ENCODE measurements at regions of chr2 and their contacts with region 1.

Region 1: DNA sequence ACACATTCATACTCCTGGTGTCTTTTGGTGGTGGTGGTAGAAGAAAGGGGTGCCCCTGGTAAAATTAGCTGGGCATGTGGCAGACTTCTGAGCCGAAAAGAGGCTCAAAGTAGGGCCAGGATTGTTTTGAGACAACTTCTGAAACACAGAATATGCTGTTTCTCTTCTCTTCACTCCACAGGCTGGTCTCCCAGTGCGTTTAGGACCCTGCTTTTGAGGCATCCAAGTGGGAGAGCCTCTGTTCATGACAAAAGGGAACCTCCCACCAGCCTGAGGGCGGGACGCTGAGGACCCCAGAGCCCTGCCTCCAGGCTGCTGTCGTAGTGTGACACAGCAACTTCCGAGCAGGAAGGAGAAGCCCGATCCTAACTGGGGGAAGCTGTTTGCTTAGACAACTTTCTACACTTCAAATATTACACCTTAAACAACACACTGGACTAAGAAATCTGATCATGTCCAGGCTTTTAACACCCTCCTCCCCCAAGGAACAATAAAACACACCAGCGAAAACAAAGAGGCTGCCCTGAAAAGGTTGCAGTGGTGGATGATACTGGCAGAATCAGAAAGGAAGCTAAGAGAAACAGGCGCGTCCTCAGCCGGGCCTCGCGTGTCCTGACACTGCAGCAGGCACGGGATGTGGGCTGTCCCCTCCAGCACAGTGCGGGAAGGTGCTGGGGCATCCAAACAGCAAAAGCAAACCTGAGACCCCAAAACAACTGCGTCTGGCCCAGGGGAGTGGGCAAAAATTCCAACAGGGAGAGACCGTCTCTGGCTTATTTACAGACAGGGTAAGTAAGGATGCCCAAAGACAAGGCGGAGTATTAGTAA is 9.3 kb downstream of the SERTAD2 start:
- DNase-seq: peak; percentile 82
- ATAC-seq: peak; percentile 75
- H3K4me3 Mint-ChIP-seq: peak overlapping the region; percentile 82
- H3K27ac Mint-ChIP-seq: peak overlapping the region; percentile 90
- H3K4me1 Mint-ChIP-seq: peaks cover 89% of the 10 kb centered on the region
- H3K27me3 Mint-ChIP-seq: no peaks in the 10 kb centered on the region
- CTCF ChIP-seq: no peak

Region 2: GRCh38 chr2:64426183-64426952 is 218.0 kb before region 1 on chr2:
- CTCF ChIA-PET with region 1: no interaction called
- POLR2A ChIA-PET with region 1: no interaction called
- intact Hi-C with region 1: no loop called
- DNase-seq: no peak
- ATAC-seq: no peak
- H3K4me3 Mint-ChIP-seq: no peak overlapping the region
- H3K27ac Mint-ChIP-seq: no peak overlapping the region
- H3K4me1 Mint-ChIP-seq: no peaks in the 10 kb centered on the region
- H3K27me3 Mint-ChIP-seq: peaks cover 2% of the 10 kb centered on the region
- CTCF ChIP-seq: no peak

Region 3: DNA sequence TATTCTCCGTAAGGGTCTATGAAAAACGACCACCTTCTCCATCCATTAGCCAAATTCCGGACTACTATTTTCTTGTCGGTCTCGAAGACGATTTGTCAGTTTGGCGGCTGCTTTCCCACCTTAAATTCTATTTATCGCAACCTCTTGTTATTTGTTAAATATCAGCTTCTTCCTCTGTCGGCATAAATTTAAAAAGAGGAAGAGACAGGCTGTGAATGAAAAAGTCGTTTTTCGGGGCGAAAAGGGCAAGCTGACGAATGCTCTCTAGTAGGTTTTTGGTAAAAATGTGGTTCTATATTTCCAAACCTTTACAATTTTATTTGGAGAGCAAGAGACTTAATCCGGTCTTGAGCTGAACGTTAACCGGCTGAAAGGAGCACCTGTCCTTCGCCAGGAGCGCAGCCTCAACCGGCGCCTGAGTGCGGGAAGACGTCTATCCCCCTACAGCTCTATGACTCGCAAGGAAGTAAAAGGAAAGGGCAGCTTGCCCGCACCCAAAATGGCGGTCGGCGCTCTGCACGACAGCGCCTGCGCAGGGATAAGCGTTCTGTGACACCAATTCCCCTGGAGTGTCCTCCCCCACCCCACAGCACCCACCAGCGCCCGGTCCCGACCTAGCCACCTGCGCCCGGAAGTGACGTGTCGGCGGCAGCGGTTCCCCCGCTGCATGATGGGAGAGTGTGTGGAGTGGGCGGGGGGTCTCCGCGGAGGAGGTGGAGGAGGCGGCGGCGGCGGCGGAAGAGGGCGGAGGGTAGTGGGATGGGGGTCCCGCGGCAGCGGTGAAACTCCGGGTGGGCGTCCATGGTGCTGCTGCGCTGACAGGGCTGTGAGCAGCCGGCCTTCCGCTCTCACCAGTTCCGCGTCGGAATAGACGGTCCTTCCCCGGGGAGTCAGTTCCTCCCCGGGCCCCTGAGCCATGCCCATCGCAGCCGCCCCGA is 120.5 kb before region 1 on chr2 and contains the start of gene AFTPH:
- CTCF ChIA-PET with region 1: interaction called, 7 read pairs
- POLR2A ChIA-PET with region 1: interaction called, 4 read pairs
- intact Hi-C with region 1: loop called (anchors 10 kb)
- DNase-seq: peak; percentile 99
- ATAC-seq: peak; percentile 93
- H3K4me3 Mint-ChIP-seq: peak within 1 kb of the TSS; percentile 99
- H3K27ac Mint-ChIP-seq: peak within 1 kb of the TSS; percentile 100
- H3K4me1 Mint-ChIP-seq: peaks cover 33% of the 10 kb centered on the region
- H3K27me3 Mint-ChIP-seq: no peaks in the 10 kb centered on the region
- CTCF ChIP-seq: no peak
- total RNA-seq, gene AFTPH: 30.6 to 31.1 TPM

Region 4: DNA sequence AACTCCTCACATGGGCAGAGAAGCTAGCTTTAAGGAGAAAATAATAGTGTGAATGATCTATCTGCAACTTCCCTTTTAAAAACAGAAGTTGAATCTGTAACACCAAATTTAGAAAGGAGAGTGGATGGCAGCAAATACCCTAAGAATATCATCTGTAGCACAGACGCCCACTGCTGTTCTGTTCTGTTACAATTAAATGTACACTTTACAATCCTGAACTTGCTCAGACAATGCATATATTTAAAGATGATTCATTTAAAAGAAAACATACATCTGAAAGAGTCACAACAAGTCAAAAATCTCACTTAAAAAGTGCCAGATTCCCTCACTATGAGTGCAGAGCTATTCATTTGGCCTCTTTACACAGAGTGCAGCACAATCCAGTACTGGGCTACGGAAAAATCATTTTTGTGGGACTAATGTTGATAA is 17.4 kb after region 1 on chr2:
- CTCF ChIA-PET with region 1: interaction called, 83 read pairs
- POLR2A ChIA-PET with region 1: interaction called, 48 read pairs
- intact Hi-C with region 1: no loop called
- DNase-seq: no peak
- ATAC-seq: peak; percentile 45
- H3K4me3 Mint-ChIP-seq: no peak overlapping the region
- H3K27ac Mint-ChIP-seq: peak overlapping the region; percentile 57
- H3K4me1 Mint-ChIP-seq: peaks cover 69% of the 10 kb centered on the region
- H3K27me3 Mint-ChIP-seq: no peaks in the 10 kb centered on the region
- CTCF ChIP-seq: no peak

Region 5: GRCh38 chr2:64750817-64751285 is 106.5 kb after region 1 on chr2:
- CTCF ChIA-PET with region 1: interaction called, 35 read pairs
- POLR2A ChIA-PET with region 1: interaction called, 7 read pairs
- intact Hi-C with region 1: no loop called
- DNase-seq: peak; percentile 99
- ATAC-seq: peak; percentile 86
- H3K4me3 Mint-ChIP-seq: peak overlapping the region; percentile 93
- H3K27ac Mint-ChIP-seq: peak overlapping the region; percentile 97
- H3K4me1 Mint-ChIP-seq: peaks cover 29% of the 10 kb centered on the region
- H3K27me3 Mint-ChIP-seq: no peaks in the 10 kb centered on the region
- CTCF ChIP-seq: no peak

Region 6: DNA sequence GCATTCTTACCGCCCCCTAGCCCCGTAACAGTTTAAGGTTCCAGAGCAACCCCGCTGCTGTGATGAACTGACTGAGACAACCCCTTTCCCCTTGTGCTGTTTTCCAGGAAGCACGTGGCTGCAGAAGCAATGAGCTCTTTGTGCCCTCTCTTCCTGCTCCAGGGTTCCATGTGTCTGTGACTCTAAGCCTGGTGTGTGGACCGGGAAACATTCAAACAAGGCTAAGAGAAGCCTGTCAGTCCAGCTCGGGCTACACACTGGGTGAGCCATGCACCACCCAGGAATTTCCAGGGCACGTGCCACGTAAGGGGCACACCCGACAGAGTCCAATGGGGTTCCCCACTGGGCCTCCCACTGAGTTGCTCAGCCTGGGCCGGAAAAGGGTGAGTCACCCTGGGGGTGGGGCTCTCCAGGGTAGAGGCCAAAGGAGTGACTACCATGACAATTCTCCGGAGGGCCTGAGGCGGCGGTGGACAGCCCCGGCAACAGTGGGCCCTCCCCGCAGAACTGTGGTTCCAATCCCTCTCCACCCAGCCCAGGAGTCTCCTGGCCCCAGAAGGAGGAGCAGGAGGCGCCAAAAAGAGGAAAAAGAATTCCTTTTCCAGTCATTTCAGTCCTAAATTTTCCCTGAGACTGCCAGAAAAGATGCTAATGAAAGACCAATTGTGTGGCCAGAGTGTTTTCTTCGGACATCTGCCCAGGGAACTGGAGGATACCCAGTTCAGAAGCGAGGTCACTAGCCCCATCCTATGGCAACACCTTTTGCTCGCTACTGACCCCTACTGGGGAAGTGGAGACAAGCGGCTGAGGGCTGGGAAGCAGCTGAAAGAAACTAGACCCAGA is 187.0 kb after region 1 on chr2:
- CTCF ChIA-PET with region 1: interaction called, 33 read pairs
- POLR2A ChIA-PET with region 1: interaction called, 3 read pairs
- intact Hi-C with region 1: loop called (anchors 5 kb)
- DNase-seq: peak; percentile 93
- ATAC-seq: peak; percentile 93
- H3K4me3 Mint-ChIP-seq: peak overlapping the region; percentile 54
- H3K27ac Mint-ChIP-seq: peak overlapping the region; percentile 88
- H3K4me1 Mint-ChIP-seq: peaks cover 22% of the 10 kb centered on the region
- H3K27me3 Mint-ChIP-seq: no peaks in the 10 kb centered on the region
- CTCF ChIP-seq: peak; percentile 97

Region 7: DNA sequence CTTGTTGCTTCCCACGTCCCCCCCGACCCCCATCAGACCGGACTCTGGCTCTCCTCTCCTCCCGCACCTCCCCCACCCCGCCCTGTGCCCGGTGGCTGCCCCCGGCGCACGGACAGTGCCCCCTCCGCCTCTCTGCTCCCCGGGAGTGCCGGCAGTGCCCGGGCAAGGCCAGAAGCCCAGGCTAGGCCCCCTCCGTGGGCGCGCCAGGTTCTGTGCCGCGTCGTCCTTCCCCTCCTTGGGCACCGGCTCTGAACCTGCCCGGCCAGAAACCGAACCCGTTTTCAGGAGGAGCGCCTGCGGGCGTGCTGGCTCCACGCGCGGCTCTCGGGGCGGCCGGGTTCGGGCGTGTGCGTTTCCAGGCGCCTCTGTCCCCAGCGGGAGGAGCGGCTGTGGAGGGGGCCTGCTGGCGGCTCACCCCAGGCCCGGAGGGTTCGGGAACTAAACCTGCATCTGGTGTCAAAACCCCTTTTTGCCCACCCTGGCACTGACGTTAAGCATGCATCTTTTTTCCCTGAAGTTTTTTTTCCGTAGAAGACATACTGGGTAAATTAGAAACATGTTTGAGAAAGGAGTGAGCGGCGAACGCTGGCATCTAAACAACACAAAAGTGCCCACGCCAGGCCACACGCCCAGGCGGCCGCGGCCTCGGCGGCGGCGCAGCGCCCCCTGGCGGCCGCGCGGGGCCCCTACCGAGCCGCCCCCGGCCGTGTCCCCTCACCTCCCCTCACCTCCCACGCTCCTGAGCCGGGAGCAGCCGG is 220.9 kb after region 1 on chr2:
- CTCF ChIA-PET with region 1: interaction called, 47 read pairs
- POLR2A ChIA-PET with region 1: no interaction called
- intact Hi-C with region 1: loop called (anchors 5 kb)
- DNase-seq: peak; percentile 72
- ATAC-seq: peak; percentile 68
- H3K4me3 Mint-ChIP-seq: peak overlapping the region; percentile 68
- H3K27ac Mint-ChIP-seq: peak overlapping the region; percentile 35
- H3K4me1 Mint-ChIP-seq: peaks cover 3% of the 10 kb centered on the region
- H3K27me3 Mint-ChIP-seq: peaks cover 6% of the 10 kb centered on the region
- CTCF ChIP-seq: peak; percentile 94

Region 8: DNA sequence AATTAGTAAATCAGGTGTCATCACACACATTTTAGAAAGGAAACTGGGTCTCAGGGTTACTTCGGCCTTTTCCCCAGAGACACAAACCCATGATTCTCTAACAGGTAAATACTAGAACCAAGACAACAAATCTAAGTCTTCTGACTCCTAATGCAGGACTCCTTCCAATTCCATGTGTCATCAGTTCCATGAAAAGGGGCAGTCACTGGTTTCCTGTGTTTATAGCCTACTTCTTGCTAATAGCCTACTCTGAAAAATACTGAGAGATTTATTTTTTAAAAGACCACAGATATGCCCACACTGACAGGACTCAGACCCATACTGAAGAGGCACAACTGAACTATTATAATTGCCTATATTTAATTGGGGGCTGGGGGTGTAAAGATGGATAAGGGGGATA is 452.6 kb after region 1 on chr2:
- CTCF ChIA-PET with region 1: no interaction called
- POLR2A ChIA-PET with region 1: no interaction called
- intact Hi-C with region 1: no loop called
- DNase-seq: no peak
- ATAC-seq: no peak
- H3K4me3 Mint-ChIP-seq: no peak overlapping the region
- H3K27ac Mint-ChIP-seq: peak overlapping the region; percentile 28
- H3K4me1 Mint-ChIP-seq: peaks cover 23% of the 10 kb centered on the region
- H3K27me3 Mint-ChIP-seq: no peaks in the 10 kb centered on the region
- CTCF ChIP-seq: no peak